ENCODE measurements at regions of chr3 and their contacts with region 1.

Region 1: GRCh38 chr3:185929192-185930151 is 8.3 kb downstream of the TRA2B start:
- DNase-seq: no peak
- CTCF ChIP-seq: no peak

Region 2: DNA sequence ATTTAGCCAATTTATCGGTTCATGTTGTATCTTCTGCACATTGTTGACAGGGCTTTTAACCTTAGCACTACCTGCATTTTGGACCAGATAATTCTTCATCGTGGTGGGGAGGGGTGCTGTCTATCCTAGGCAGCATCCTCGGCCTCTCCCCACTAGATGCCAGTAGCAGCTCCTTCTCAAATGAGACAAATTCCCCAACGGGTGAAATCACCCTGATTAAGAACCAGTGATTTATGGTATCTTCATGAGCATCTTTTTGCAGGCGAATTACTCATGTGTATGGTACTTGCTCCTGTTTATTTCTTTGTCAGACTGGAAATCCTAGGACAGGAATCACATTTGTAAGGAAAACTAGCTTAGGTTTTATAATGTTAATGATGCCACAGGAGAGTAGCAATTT is 844.6 kb before region 1 on chr3:
- CTCF ChIA-PET with region 1: no interaction called
- POLR2A ChIA-PET with region 1: no interaction called
- DNase-seq: no peak
- CTCF ChIP-seq: no peak

Region 3: DNA sequence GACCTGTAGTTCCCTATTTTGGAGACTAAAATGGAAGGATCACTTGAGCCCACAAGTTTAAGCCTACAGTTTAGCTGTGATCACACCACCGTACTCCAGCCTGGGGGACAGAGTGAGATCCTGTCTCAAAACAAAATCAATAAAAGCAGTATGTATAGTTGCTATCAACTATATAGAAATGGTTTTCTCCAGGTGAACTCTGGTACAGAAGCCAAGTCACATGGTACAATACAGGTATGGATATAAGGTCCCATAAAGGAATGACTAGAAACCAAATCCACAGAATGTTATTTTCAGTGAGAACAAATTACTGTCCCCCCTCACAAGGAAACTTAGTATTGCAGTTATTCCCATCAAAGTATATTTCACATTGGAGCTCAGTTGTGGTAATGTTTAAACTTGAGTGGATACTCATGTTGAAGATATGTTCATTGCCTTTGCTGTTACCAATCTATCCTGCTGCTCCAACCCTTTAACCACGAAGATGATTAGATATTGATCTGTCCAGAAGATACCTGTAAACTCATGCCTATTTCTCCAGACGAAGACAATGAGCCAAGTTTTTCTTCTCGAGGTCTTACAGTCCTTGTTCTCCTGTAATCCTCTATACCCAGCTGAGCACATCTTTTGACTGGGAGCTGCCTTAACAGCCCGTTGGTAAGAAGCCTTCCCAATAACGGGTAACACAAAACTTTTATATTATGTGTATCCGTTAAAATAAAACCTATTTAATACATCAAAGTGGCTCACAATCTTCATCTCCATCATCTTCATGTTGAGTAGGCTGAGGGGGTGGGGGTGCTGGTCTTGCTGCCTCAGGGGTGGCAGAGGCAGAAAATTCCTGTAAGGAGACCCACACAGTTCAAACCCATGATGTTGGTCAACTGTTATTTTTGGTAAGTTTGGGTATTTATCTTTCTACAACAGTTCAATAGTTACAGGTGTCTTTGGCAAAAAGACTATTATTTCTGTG is 16.3 kb before region 1 on chr3:
- CTCF ChIA-PET with region 1: interaction called, 6 read pairs
- POLR2A ChIA-PET with region 1: interaction called, 11 read pairs
- DNase-seq: no peak
- CTCF ChIP-seq: no peak

Measured in GM10248 (cell line).